ENCODE measurements at regions of chr13 and their contacts with region 1.

Region 1: GRCh38 chr13:97359181-97360057 is 74.5 kb upstream of the RAP2A start:
- DNase-seq: peak; percentile 44
- ATAC-seq: peak; percentile 94
- H3K4me3 ChIP-seq: no peak overlapping the region
- H3K27ac ChIP-seq: peak overlapping the region; percentile 28; the same call in 1 of the 2 replicates
- H3K4me1 ChIP-seq: no peaks in the 10 kb centered on the region
- H3K27me3 ChIP-seq: no peaks in the 10 kb centered on the region
- CTCF ChIP-seq: peak; percentile 71 to 94 (median 72); a peak in 5 of 6 replicates
- POLR2A ChIP-seq: no peak
- RAD21 ChIP-seq: peak; percentile 87

Region 2: DNA sequence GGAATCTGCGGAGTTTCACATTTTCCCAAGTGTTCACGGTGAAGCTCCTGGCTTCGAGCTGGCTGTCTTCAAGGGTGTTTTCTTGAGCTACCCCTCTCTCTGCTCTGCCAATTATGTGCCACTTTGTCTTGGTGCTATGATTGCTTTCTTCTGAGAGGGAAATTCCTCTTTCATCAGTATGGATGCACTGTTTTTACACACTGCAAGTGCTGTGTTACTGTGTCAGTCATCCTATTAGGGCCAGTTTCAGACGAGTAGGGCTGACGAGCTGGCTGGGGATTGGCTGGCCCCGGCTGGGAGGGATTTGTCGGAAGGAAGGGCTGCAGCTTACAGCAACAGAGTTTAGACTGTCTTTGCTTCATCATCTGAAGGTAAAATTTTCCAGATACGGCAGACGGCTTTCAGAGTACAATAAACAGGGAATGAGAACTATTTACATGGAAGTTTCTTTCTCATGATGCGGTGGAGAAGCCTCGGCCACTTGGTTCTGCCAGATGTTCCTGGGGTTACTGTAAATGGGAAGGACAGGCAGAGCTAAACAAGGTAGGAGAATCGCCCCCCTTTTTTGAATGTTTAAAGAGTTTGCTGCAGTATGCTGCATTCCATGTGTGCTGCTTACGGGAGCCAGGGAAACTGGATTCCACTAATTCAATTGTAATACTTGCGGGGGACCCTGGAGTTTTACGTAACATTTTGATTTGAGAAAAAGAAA is 137.3 kb before region 1 on chr13 and contains the start of gene MBNL2:
- CTCF ChIA-PET with region 1: no interaction called
- POLR2A ChIA-PET with region 1: no interaction called
- RAD21 ChIA-PET with region 1: no interaction called
- intact Hi-C with region 1: loop called (anchors 5 kb)
- DNase-seq: peak; percentile 81
- ATAC-seq: peak; percentile 99
- H3K4me3 ChIP-seq: peak within 1 kb of the TSS; percentile 74 to 85
- H3K27ac ChIP-seq: peak within 1 kb of the TSS; percentile 74
- H3K4me1 ChIP-seq: peaks cover 45 to 47% of the 10 kb centered on the region in 2 experiments
- H3K27me3 ChIP-seq: no peaks in the 10 kb centered on the region
- CTCF ChIP-seq: no peak
- POLR2A ChIP-seq: no peak
- RAD21 ChIP-seq: 0 out of 2 replicates have a peak, but pooled peaks have one; percentile 14
- total RNA-seq, gene MBNL2: 73.9 TPM

Region 3: DNA sequence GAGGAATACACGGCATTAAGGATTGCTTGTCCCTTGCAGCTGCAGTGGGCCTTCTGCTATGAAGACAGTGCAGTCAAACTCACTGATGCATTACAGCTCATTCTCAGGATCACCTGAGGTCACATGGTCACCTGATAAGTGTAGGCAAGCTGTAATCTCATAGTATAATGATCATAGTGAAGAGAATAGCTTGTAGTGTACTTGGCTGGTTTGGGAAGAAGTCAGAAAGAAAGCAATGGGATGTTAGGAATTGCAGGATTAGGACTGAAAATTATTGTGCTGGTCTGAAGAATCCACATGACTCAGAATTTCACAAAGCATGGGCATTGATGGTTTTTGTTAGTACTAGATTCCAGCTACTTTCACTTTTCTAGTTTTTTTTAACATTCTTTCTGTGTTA is 60.6 kb before region 1 on chr13:
- CTCF ChIA-PET with region 1: no interaction called
- POLR2A ChIA-PET with region 1: no interaction called
- RAD21 ChIA-PET with region 1: no interaction called
- intact Hi-C with region 1: no loop called
- DNase-seq: no peak
- ATAC-seq: no peak
- H3K4me3 ChIP-seq: no peak overlapping the region
- H3K27ac ChIP-seq: no peak overlapping the region
- H3K4me1 ChIP-seq: peaks cover 9 to 14% of the 10 kb centered on the region in 2 experiments; a peak in 2 of 4 replicates
- H3K27me3 ChIP-seq: no peaks in the 10 kb centered on the region
- CTCF ChIP-seq: no peak
- POLR2A ChIP-seq: no peak
- RAD21 ChIP-seq: no peak

Region 4: DNA sequence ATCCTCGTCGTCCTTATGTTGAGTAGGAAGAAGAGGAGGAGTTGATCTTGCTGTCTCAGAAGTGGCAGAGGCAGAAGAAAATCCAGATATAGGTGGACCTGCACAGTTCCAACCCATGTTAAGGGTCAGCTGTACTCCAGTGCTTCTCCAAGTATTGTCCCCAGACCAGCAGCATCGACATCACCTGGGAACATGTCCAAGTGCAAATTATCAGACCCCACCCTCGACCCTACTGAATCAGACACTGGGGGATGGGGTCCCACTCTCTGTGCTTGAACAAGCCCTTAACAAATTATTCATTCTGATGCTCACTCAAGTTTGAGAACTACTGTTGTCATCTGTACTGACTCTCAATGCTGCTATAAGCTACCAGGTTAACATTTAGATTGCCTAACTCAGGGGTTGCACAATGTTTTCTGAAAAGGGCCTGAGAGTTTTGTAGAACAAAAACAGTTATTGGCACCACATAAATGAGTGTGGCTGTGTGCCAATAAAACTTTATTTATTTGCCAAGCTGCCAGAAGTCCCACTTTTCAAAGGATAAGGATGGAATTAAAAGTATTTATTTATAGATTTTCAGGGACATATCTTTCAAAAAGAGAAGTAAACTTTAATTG is 367.4 kb after region 1 on chr13:
- CTCF ChIA-PET with region 1: no interaction called
- POLR2A ChIA-PET with region 1: no interaction called
- RAD21 ChIA-PET with region 1: no interaction called
- intact Hi-C with region 1: no loop called
- DNase-seq: no peak
- ATAC-seq: no peak
- H3K4me3 ChIP-seq: no peak overlapping the region
- H3K27ac ChIP-seq: no peak overlapping the region
- H3K4me1 ChIP-seq: no peaks in the 10 kb centered on the region
- H3K27me3 ChIP-seq: no peaks in the 10 kb centered on the region
- CTCF ChIP-seq: no peak
- POLR2A ChIP-seq: no peak
- RAD21 ChIP-seq: no peak